PC-9 (cell line): ENCODE measurements at regions of chr22 and their contacts with region 1.

Region 1: GRCh38 chr22:24938741-24939341 is 7.7 kb downstream of the LHFPL7 start:
- DNase-seq: no peak
- H3K4me3 ChIP-seq: no peak overlapping the region
- H3K27ac ChIP-seq: no peak overlapping the region
- H3K4me1 ChIP-seq: no peaks in the 10 kb centered on the region
- H3K27me3 ChIP-seq: no peaks in the 10 kb centered on the region
- CTCF ChIP-seq: peak; percentile 85

Region 2: GRCh38 chr22:24325105-24325757 is 613.6 kb before region 1 on chr22:
- CTCF ChIA-PET with region 1: no interaction called
- POLR2A ChIA-PET with region 1: no interaction called
- intact Hi-C with region 1: no loop called
- DNase-seq: peak in 1 of 2 experiments; percentile 68
- H3K4me3 ChIP-seq: no peak overlapping the region
- H3K27ac ChIP-seq: no peak overlapping the region
- H3K4me1 ChIP-seq: no peaks in the 10 kb centered on the region
- H3K27me3 ChIP-seq: no peaks in the 10 kb centered on the region
- CTCF ChIP-seq: peak; percentile 66

Region 3: GRCh38 chr22:25057013-25057881 is 118.4 kb after region 1 on chr22:
- CTCF ChIA-PET with region 1: interaction called, 8 read pairs
- POLR2A ChIA-PET with region 1: no interaction called
- intact Hi-C with region 1: loop called (anchors 1 kb)
- DNase-seq: peak in 1 of 2 experiments; percentile 54
- H3K4me3 ChIP-seq: no peak overlapping the region
- H3K27ac ChIP-seq: no peak overlapping the region
- H3K4me1 ChIP-seq: no peaks in the 10 kb centered on the region
- H3K27me3 ChIP-seq: no peaks in the 10 kb centered on the region
- CTCF ChIP-seq: peak; percentile 91

Region 4: GRCh38 chr22:25110846-25111578 is 172.2 kb after region 1 on chr22:
- CTCF ChIA-PET with region 1: no interaction called
- POLR2A ChIA-PET with region 1: no interaction called
- intact Hi-C with region 1: loop called (anchors 2 kb)
- DNase-seq: peak; percentile 73 to 85
- H3K4me3 ChIP-seq: peak overlapping the region; percentile 78
- H3K27ac ChIP-seq: peak overlapping the region; percentile 9; the same call in 1 of the 2 replicates
- H3K4me1 ChIP-seq: peaks cover 5% of the 10 kb centered on the region
- H3K27me3 ChIP-seq: no peaks in the 10 kb centered on the region
- CTCF ChIP-seq: peak; percentile 74

Region 5: GRCh38 chr22:25172153-25172552 is 233.3 kb after region 1 on chr22:
- CTCF ChIA-PET with region 1: no interaction called
- POLR2A ChIA-PET with region 1: no interaction called
- intact Hi-C with region 1: loop called (anchors 5 kb)
- DNase-seq: peak in 1 of 2 experiments; percentile 12
- H3K4me3 ChIP-seq: no peak overlapping the region
- H3K27ac ChIP-seq: no peak overlapping the region
- H3K4me1 ChIP-seq: peaks cover 25% of the 10 kb centered on the region
- H3K27me3 ChIP-seq: no peaks in the 10 kb centered on the region
- CTCF ChIP-seq: peak; percentile 73

Region 6: GRCh38 chr22:25327018-25327755 is 388.3 kb after region 1 on chr22:
- CTCF ChIA-PET with region 1: no interaction called
- POLR2A ChIA-PET with region 1: no interaction called
- intact Hi-C with region 1: no loop called
- DNase-seq: no peak
- H3K4me3 ChIP-seq: no peak overlapping the region
- H3K27ac ChIP-seq: no peak overlapping the region
- H3K4me1 ChIP-seq: no peaks in the 10 kb centered on the region
- H3K27me3 ChIP-seq: no peaks in the 10 kb centered on the region
- CTCF ChIP-seq: no peak